AG04449 (cell line): ENCODE measurements at regions of chr15 and their contacts with region 1.

Region 1: GRCh38 chr15:78195735-78196201 is 38.6 kb downstream of the ACSBG1 start:
- DNase-seq: no peak
- H3K4me3 ChIP-seq: no peak overlapping the region
- CTCF ChIP-seq: peak; percentile 64

Region 2: GRCh38 chr15:77959432-77959879 is 236.3 kb before region 1 on chr15:
- CTCF ChIA-PET with region 1: interaction called, 18 read pairs
- POLR2A ChIA-PET with region 1: no interaction called
- DNase-seq: no peak
- H3K4me3 ChIP-seq: peak overlapping the region; percentile 34
- CTCF ChIP-seq: peak; percentile 92

Region 3: DNA sequence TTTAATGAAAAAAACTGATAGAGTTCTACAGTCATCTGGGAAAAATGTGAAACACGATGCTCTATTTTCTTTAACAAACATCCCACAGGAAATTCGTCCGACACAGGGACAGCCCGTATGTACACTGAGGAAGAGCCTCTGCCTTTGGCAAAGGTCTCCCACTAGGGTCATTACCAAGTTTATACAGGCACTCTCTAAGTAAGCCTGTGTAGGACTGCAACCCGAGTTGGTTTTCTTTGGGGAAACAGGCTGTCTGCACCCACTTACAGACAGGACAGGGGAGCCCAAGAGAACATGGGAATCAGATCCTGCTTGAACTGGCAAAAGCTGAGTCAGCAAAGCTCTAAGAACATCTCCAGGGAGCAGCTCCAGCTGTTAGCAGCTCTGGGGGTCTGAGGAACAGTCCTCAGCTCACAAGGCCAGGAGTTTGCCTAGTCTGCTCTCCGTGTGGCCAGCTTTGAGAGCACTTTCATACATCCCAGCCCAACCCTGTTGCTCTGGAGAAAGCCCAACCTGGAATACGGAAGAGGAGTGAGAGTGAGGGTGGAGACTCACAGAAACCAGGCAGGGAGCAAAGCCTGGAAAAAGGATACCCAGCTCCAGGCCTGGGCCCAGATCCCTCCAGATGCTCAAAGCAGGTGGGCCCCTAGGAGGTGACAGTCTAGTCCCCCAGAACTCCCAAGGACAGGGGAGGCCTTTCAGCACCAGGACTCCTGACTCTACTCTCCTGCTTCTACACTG is 120.1 kb before region 1 on chr15:
- CTCF ChIA-PET with region 1: no interaction called
- POLR2A ChIA-PET with region 1: no interaction called
- DNase-seq: peak; percentile 85
- H3K4me3 ChIP-seq: peak overlapping the region; percentile 89
- CTCF ChIP-seq: no peak

Region 4: GRCh38 chr15:78131295-78132061 is 64.3 kb before region 1 on chr15 and contains the start of gene CIB2:
- CTCF ChIA-PET with region 1: interaction called, 21 read pairs
- POLR2A ChIA-PET with region 1: no interaction called
- DNase-seq: no peak
- H3K4me3 ChIP-seq: peak within 1 kb of the TSS; percentile 76
- CTCF ChIP-seq: peak; percentile 76

Region 5: DNA sequence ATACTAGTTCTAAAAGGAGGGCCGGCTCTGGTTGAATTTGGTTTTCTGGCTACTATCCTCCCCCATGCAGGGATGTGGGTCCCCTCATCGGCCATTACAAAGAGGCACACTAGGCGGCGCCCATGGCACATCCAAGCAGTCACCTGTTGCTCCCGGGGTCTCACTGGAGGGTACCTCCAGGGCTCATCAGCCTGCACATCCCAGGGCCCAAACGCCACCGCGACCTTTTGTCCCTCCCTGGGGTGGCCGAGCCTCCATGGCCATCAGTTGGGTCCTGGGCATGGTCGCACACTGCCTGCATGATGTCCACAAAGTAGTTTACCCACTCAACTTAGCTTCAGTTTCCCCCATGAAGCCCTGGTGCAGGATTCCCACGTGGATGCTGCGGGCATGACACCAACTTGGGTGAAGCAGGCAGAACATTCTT is 18.3 kb before region 1 on chr15:
- CTCF ChIA-PET with region 1: interaction called, 16 read pairs
- POLR2A ChIA-PET with region 1: no interaction called
- DNase-seq: no peak
- H3K4me3 ChIP-seq: no peak overlapping the region
- CTCF ChIP-seq: peak; percentile 74

Region 6: GRCh38 chr15:78182821-78183220 is 12.9 kb before region 1 on chr15:
- CTCF ChIA-PET with region 1: interaction called, 16 read pairs
- POLR2A ChIA-PET with region 1: no interaction called
- DNase-seq: no peak
- H3K4me3 ChIP-seq: no peak overlapping the region
- CTCF ChIP-seq: no peak